Right ventricle myocardium inferior (tissue), 1 donor: ENCODE measurements at regions of chr4 and their contacts with region 1.

Region 1: DNA sequence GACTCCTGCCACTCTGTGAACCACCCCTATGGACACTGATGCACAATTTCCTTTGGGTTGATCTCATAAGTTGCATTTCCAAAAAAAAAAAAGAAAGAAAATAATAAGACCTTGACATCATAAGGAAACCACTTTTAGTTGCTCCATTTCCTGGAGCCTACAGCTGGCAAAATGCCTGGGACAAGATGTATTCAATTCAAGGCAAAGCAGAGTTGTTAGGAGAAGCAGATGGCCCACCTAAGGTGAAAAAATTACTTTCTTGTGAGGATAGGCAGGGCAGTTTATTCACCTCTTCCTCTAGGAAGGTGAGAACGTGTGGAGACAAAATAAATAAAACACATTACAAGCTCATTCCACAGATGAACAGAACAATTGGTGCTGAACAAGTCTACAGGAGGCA is 14.1 kb upstream of the SCRG1 start:
- DNase-seq: no peak
- ATAC-seq: no peak

Region 2: GRCh38 chr4:173334085-173334772 is 78.8 kb before region 1 on chr4 and contains the start of gene HMGB2:
- intact Hi-C with region 1: loop called (anchors 5 kb)
- DNase-seq: peak; percentile 100
- ATAC-seq: peak; percentile 99
- total RNA-seq, gene HMGB2: 42.1 TPM

Region 3: GRCh38 chr4:173573286-173573685 is 160.2 kb after region 1 on chr4:
- intact Hi-C with region 1: no loop called
- DNase-seq: no peak
- ATAC-seq: no peak

Region 4: GRCh38 chr4:173766171-173766600 is 353.1 kb after region 1 on chr4:
- intact Hi-C with region 1: no loop called
- DNase-seq: no peak
- ATAC-seq: no peak